K562 (cell line): ENCODE measurements at regions of chr12 and their contacts with region 1.

Region 1: GRCh38 chr12:64256166-64256800 is 34.2 kb upstream of the KICS2 start:
- DNase-seq: peak; percentile 12 to 68 (median 28)
- ATAC-seq: peak; percentile 85
- H3K4me3 ChIP-seq: no peak overlapping the region
- H3K27ac ChIP-seq: no peak overlapping the region
- H3K4me1 ChIP-seq: no peaks in the 10 kb centered on the region; a peak in 1 of 5 replicates
- H3K27me3 ChIP-seq: peaks cover 2 to 7% of the 10 kb centered on the region in 2 experiments; a peak in 2 of 5 replicates
- CTCF ChIP-seq: peak; percentile 37 to 87 (median 51); a peak in 3 of 6 replicates
- EP300 ChIP-seq: no peak
- POLR2A ChIP-seq: no peak
- RAD21 ChIP-seq: peak; percentile 93 to 95

Region 2: DNA sequence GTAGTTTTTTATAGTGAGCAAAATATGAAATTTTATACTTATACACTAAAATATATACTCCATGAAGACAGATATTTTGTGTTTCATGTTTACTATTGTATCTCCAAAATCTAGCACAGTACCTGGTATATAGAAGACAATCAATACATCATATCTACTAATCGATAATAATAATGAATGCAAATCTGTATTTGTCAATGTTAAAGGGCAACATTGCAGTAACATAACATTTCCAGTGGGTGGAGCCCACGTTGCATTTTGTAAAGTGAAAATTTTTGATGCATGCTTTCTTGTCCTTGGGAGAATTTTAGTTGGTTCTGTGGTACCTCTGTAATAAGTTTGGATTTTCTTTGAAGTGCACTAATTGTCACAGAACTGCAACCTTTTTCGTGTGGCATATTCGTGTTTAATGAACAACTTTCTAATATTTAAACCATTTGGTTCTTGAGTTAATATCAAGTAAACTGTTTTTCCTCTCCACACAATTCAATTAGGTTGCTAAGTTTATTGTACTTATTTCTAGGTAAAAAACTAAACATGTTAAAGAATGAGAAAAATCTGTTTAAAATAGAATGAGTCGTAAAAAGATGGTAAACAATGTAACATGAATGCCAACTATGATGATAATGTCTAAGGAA is 1152.7 kb before region 1 on chr12:
- CTCF ChIA-PET with region 1: no interaction called
- POLR2A ChIA-PET with region 1: no interaction called
- in situ Hi-C with region 1: no loop called
- intact Hi-C with region 1: loop called (anchors 5 kb)
- DNase-seq: peak; percentile 9 to 35 (median 23)
- ATAC-seq: no peak
- H3K4me3 ChIP-seq: no peak overlapping the region
- H3K27ac ChIP-seq: no peak overlapping the region
- H3K4me1 ChIP-seq: no peaks in the 10 kb centered on the region
- H3K27me3 ChIP-seq: peaks cover 0 to 5% of the 10 kb centered on the region in 2 experiments; a peak in 1 of 5 replicates
- CTCF ChIP-seq: peak; percentile 50 to 78 (median 67)
- EP300 ChIP-seq: no peak
- POLR2A ChIP-seq: no peak
- RAD21 ChIP-seq: peak; percentile 83 to 86

Region 3: DNA sequence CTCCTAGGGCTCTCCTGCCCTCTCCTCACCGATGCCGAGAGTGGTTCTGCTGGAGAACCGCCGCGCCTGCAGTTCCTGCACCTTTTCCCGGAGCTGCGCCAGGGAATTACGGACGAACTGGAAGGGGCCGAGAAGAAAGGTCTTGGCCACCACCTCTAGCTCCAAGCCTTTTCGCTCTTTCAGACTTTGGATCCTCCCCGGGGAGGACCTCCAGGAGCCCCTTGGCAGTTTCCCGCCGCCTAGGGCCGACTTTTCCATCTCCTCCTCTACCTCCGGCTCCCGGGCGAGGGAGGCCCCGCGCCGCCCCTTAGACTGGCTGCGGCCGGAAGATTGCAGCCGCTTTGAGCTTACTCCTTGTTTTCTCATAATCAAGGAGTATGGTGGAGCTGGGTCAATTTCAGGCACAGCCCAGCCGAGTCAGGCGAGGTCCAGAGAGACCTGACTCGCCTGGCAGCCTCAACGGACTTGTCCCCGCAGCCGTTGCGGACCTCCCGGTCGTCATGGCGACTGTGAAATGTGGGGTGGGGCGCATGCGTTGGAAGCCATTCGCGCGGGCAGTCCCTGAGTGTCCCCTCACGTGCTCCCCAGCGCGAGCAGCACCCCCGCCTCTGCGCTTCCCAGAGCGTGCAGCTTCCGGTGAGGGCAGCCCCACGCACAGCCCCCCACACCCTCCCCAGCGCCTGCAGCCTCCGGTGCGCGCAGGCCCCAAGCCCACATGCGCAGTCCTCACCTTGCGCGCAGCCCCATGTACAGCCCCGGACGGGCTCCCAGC is 588.1 kb before region 1 on chr12 and contains the start of gene DPY19L2:
- CTCF ChIA-PET with region 1: no interaction called
- POLR2A ChIA-PET with region 1: no interaction called
- in situ Hi-C with region 1: loop called (anchors 10 kb)
- intact Hi-C with region 1: loop called (anchors 5 kb)
- DNase-seq: no peak
- ATAC-seq: no peak
- H3K4me3 ChIP-seq: no peak within 1 kb of the TSS
- H3K27ac ChIP-seq: no peak within 1 kb of the TSS
- H3K4me1 ChIP-seq: peaks cover 0 to 6% of the 10 kb centered on the region in 2 experiments; a peak in 2 of 5 replicates
- H3K27me3 ChIP-seq: peaks cover 0 to 15% of the 10 kb centered on the region in 2 experiments; a peak in 1 of 5 replicates
- CTCF ChIP-seq: no peak
- EP300 ChIP-seq: no peak
- POLR2A ChIP-seq: no peak
- RAD21 ChIP-seq: no peak
- polyA plus RNA-seq, gene DPY19L2: 0.06 TPM in 1 of 2 experiments, not detected in the other

Region 4: GRCh38 chr12:63836936-63837335 is 419.3 kb before region 1 on chr12:
- CTCF ChIA-PET with region 1: interaction called, 16 read pairs
- POLR2A ChIA-PET with region 1: no interaction called
- in situ Hi-C with region 1: loop called (anchors 5 kb)
- intact Hi-C with region 1: no loop called
- DNase-seq: no peak
- ATAC-seq: no peak
- H3K4me3 ChIP-seq: no peak overlapping the region
- H3K27ac ChIP-seq: no peak overlapping the region
- H3K4me1 ChIP-seq: no peaks in the 10 kb centered on the region
- H3K27me3 ChIP-seq: no peaks in the 10 kb centered on the region
- CTCF ChIP-seq: no peak
- EP300 ChIP-seq: no peak
- POLR2A ChIP-seq: no peak
- RAD21 ChIP-seq: no peak

Region 5: DNA sequence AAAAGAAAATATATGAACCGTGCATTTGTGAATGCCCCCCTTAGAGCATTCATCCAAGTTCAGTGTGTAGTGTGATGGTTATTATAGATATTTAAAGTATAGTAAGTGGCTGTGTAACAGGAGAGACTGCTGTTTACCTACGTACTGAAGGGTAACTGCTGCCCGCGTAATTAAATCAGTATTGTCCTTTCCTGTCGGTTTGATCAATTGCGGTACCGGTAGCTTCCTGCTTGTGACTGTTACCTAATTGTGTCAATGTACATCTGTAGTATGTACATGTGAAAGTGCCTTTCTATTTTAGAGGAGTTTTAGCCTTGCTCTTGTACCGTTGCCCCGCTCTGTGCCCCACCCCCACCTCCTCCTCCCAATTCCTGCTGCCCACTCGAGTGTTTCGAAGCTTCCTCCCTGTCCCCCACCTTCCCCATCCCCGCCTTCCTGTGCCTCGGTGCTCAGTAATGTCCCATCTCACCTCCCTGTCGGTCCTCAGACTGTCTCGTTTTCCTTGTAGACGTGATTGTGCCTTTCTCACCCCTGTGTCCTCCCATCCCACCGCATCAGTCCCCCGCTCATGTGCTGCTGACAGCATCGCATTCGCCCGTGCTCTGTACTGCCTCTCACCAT is 109.2 kb before region 1 on chr12:
- CTCF ChIA-PET with region 1: interaction called, 3 read pairs
- POLR2A ChIA-PET with region 1: no interaction called
- in situ Hi-C with region 1: no loop called
- intact Hi-C with region 1: loop called (anchors 10 kb)
- DNase-seq: no peak
- ATAC-seq: no peak
- H3K4me3 ChIP-seq: no peak overlapping the region
- H3K27ac ChIP-seq: no peak overlapping the region
- H3K4me1 ChIP-seq: no peaks in the 10 kb centered on the region
- H3K27me3 ChIP-seq: peaks cover 0 to 18% of the 10 kb centered on the region in 2 experiments; a peak in 2 of 5 replicates
- CTCF ChIP-seq: no peak
- EP300 ChIP-seq: no peak
- POLR2A ChIP-seq: no peak
- RAD21 ChIP-seq: no peak